Calu3 (cell line): ENCODE measurements at regions of chr17 and their contacts with region 1.

Region 1: GRCh38 chr17:43979011-43979410 is 25.3 kb upstream of the PYY start:
- DNase-seq: no peak
- H3K4me3 Mint-ChIP-seq: no peak overlapping the region
- H3K27ac Mint-ChIP-seq: no peak overlapping the region
- H3K4me1 Mint-ChIP-seq: no peaks in the 10 kb centered on the region
- H3K27me3 Mint-ChIP-seq: peaks cover 90% of the 10 kb centered on the region
- CTCF ChIP-seq: no peak

Region 2: DNA sequence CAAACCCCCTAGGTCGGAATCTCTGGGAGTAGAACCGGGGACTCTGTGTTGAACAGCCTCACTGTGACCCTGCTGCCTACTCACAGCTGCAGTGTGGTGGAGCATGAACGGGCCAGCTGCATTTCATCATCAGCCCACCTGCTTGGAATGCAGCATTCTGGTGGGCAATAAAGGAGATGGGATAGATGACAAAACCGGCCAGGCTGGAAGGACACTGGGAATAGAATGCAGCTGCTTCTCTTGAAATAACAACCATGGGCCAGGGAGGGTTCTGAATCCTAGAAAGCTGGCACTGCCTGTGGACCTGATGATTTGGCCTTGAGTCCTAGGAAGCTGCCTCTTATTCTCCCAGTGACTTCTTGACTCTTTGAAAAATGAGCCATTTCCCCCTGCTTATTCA is 175.3 kb before region 1 on chr17:
- CTCF ChIA-PET with region 1: interaction called, 17 read pairs
- intact Hi-C with region 1: no loop called
- DNase-seq: no peak
- H3K4me3 Mint-ChIP-seq: no peak overlapping the region
- H3K27ac Mint-ChIP-seq: no peak overlapping the region
- H3K4me1 Mint-ChIP-seq: no peaks in the 10 kb centered on the region
- H3K27me3 Mint-ChIP-seq: no peaks in the 10 kb centered on the region
- CTCF ChIP-seq: no peak